ENCODE measurements at regions of chr11 and their contacts with region 1.

Region 1: GRCh38 chr11:82867495-82868082 is 32.6 kb downstream of the PRCP start:
- DNase-seq: peak; percentile 50 to 86 (median 79)
- ATAC-seq: peak; percentile 52
- H3K4me3 ChIP-seq: no peak overlapping the region
- H3K4me3 Mint-ChIP-seq: no peak overlapping the region
- H3K27ac ChIP-seq: no peak overlapping the region
- H3K27ac Mint-ChIP-seq: no peak overlapping the region
- H3K4me1 ChIP-seq: no peaks in the 10 kb centered on the region
- H3K4me1 Mint-ChIP-seq: peaks cover 9% of the 10 kb centered on the region
- H3K27me3 ChIP-seq: no peaks in the 10 kb centered on the region
- H3K27me3 Mint-ChIP-seq: no peaks in the 10 kb centered on the region
- CTCF ChIP-seq: peak; percentile 90

Region 2: DNA sequence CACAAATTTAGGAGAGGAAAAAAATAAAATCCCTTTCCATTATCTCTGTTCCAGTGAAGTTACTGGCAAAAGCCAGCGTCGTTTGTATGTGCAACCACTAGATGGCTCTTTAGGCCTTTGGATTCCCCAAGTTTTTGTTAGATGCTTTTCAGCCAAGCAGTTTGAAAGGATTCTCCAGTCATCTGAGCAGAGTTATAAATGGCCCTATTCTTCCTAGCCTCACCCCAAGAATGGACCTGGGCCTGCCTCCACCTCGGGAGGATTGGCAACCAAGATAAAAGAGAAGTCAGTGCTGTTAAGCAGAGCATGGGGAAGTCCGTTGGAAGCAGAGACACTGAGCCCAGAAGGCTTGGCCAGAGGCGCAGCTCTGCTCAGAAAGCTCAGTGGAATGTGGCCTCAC is 149.3 kb before region 1 on chr11:
- CTCF ChIA-PET with region 1: interaction called, 11 read pairs
- POLR2A ChIA-PET with region 1: no interaction called
- intact Hi-C with region 1: loop called (anchors 1 kb)
- DNase-seq: peak in 3 of 9 experiments; percentile 8 to 48 (median 15)
- ATAC-seq: peak; percentile 36
- H3K4me3 ChIP-seq: no peak overlapping the region
- H3K4me3 Mint-ChIP-seq: no peak overlapping the region
- H3K27ac ChIP-seq: no peak overlapping the region
- H3K27ac Mint-ChIP-seq: no peak overlapping the region
- H3K4me1 ChIP-seq: no peaks in the 10 kb centered on the region
- H3K4me1 Mint-ChIP-seq: no peaks in the 10 kb centered on the region
- H3K27me3 ChIP-seq: no peaks in the 10 kb centered on the region
- H3K27me3 Mint-ChIP-seq: peaks cover 6% of the 10 kb centered on the region
- CTCF ChIP-seq: peak; percentile 67

Region 3: DNA sequence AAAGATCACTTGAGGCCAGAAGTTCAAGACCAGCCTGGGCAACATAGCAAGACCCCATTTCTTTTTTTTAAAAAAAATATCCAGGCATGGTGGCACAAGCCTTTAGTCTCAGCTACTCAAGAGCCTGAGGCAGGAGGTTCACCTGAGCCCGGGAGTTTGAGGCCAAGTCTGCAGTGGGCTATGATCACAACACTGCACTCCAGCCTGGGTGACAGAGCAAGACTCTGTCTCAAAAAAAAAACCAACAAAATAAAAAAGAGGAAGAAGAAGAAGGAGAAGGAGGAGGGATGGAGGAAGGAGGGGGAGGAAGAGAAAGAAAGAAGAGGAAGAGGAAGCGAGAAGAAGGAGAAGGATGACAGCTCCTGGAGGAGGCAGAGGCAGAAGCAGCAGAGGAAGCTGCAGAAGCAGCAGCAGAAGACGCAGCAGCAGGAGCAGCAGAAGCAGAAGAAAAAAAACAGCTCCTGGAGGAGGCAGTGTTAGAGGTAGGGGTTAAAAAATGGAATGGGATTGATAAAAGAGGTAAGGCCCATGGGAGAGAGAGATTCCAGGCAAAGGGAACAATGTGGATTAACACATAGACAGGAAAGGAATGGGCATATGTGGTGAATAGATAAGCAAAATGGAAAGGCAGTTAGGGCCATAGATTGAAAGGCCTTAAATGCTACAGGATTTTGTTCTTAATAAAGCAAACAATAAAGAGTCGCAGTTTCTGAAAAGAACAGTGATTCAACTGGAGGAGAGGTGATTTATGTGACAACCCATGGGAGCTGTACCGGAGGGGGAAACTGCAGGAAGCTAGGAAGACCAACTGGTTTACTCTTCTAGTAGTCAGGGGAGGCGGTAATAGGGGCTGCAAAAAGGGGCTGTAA is 21.8 kb after region 1 on chr11:
- CTCF ChIA-PET with region 1: interaction called, 14 read pairs
- POLR2A ChIA-PET with region 1: no interaction called
- intact Hi-C with region 1: no loop called
- DNase-seq: no peak
- ATAC-seq: no peak
- H3K4me3 ChIP-seq: no peak overlapping the region
- H3K4me3 Mint-ChIP-seq: no peak overlapping the region
- H3K27ac ChIP-seq: no peak overlapping the region
- H3K27ac Mint-ChIP-seq: no peak overlapping the region
- H3K4me1 ChIP-seq: no peaks in the 10 kb centered on the region
- H3K4me1 Mint-ChIP-seq: peaks cover 7% of the 10 kb centered on the region
- H3K27me3 ChIP-seq: no peaks in the 10 kb centered on the region
- H3K27me3 Mint-ChIP-seq: no peaks in the 10 kb centered on the region
- CTCF ChIP-seq: no peak

Region 4: DNA sequence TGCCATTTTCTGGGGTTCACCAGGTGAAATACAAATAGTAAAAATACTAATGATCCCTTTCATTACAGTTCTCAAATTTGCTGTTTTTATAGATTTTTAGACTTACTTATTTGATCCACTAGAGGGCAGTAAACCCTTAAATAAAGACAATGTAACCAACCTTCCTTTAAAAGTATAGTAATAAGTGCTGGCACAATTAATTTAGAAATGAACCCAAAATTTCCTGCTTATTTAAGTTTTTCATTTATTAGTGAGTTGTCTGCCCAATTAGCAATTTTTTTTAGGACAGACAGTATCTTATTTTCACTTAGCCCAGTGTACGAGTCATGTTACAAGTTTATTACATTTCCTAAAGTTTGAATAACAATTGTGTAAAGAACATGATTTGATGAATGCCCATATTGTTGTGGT is 38.7 kb after region 1 on chr11:
- CTCF ChIA-PET with region 1: interaction called, 15 read pairs
- POLR2A ChIA-PET with region 1: interaction called, 6 read pairs
- intact Hi-C with region 1: loop called in 1 of 2 experiments (anchors 2 kb)
- DNase-seq: peak in 2 of 9 experiments; percentile 38 to 61
- ATAC-seq: no peak
- H3K4me3 ChIP-seq: no peak overlapping the region
- H3K4me3 Mint-ChIP-seq: no peak overlapping the region
- H3K27ac ChIP-seq: no peak overlapping the region
- H3K27ac Mint-ChIP-seq: peak overlapping the region; percentile 19
- H3K4me1 ChIP-seq: peaks cover 28% of the 10 kb centered on the region
- H3K4me1 Mint-ChIP-seq: peaks cover 38% of the 10 kb centered on the region
- H3K27me3 ChIP-seq: no peaks in the 10 kb centered on the region
- H3K27me3 Mint-ChIP-seq: no peaks in the 10 kb centered on the region
- CTCF ChIP-seq: peak; percentile 72

Region 5: GRCh38 chr11:82988936-82989627 is 121.5 kb after region 1 on chr11:
- CTCF ChIA-PET with region 1: interaction called, 21 read pairs
- POLR2A ChIA-PET with region 1: no interaction called
- intact Hi-C with region 1: loop called (anchors 1 to 2 kb)
- DNase-seq: no peak
- ATAC-seq: no peak
- H3K4me3 ChIP-seq: no peak overlapping the region
- H3K4me3 Mint-ChIP-seq: no peak overlapping the region
- H3K27ac ChIP-seq: no peak overlapping the region
- H3K27ac Mint-ChIP-seq: peak overlapping the region; percentile 8
- H3K4me1 ChIP-seq: peaks cover 3% of the 10 kb centered on the region
- H3K4me1 Mint-ChIP-seq: peaks cover 28% of the 10 kb centered on the region
- H3K27me3 ChIP-seq: no peaks in the 10 kb centered on the region
- H3K27me3 Mint-ChIP-seq: no peaks in the 10 kb centered on the region
- CTCF ChIP-seq: no peak

Region 6: GRCh38 chr11:83292709-83293456 is 425.3 kb after region 1 on chr11:
- CTCF ChIA-PET with region 1: interaction called, 10 read pairs
- POLR2A ChIA-PET with region 1: no interaction called
- intact Hi-C with region 1: no loop called
- DNase-seq: peak in 4 of 9 experiments; percentile 12 to 68 (median 30)
- ATAC-seq: peak; percentile 85
- H3K4me3 ChIP-seq: no peak overlapping the region
- H3K4me3 Mint-ChIP-seq: peak overlapping the region; percentile 70
- H3K27ac ChIP-seq: no peak overlapping the region
- H3K27ac Mint-ChIP-seq: peak overlapping the region; percentile 63
- H3K4me1 ChIP-seq: no peaks in the 10 kb centered on the region
- H3K4me1 Mint-ChIP-seq: peaks cover 6% of the 10 kb centered on the region
- H3K27me3 ChIP-seq: no peaks in the 10 kb centered on the region
- H3K27me3 Mint-ChIP-seq: peaks cover 3% of the 10 kb centered on the region
- CTCF ChIP-seq: peak; percentile 63

Region 7: GRCh38 chr11:83819933-83820549 is 952.5 kb after region 1 on chr11:
- CTCF ChIA-PET with region 1: interaction called, 11 read pairs
- POLR2A ChIA-PET with region 1: no interaction called
- intact Hi-C with region 1: loop called in 1 of 2 experiments (anchors 1 kb)
- DNase-seq: peak in 2 of 9 experiments; percentile 17 to 29
- ATAC-seq: no peak
- H3K4me3 ChIP-seq: no peak overlapping the region
- H3K4me3 Mint-ChIP-seq: no peak overlapping the region
- H3K27ac ChIP-seq: no peak overlapping the region
- H3K27ac Mint-ChIP-seq: no peak overlapping the region
- H3K4me1 ChIP-seq: no peaks in the 10 kb centered on the region
- H3K4me1 Mint-ChIP-seq: no peaks in the 10 kb centered on the region
- H3K27me3 ChIP-seq: no peaks in the 10 kb centered on the region
- H3K27me3 Mint-ChIP-seq: peaks cover 3% of the 10 kb centered on the region
- CTCF ChIP-seq: peak; percentile 33

Measured in CD8-positive, alpha-beta T cell (primary cell).